Caco-2 (cell line): ENCODE measurements at regions of chr19 and their contacts with region 1.

Region 1: GRCh38 chr19:37941782-37942515 is 34.9 kb downstream of the SIPA1L3 start:
- DNase-seq: peak; percentile 91 to 94
- H3K4me3 ChIP-seq: no peak overlapping the region
- H3K4me3 Mint-ChIP-seq: peak overlapping the region; percentile 68
- H3K27ac Mint-ChIP-seq: peak overlapping the region; percentile 94
- H3K4me1 ChIP-seq: peaks cover 68% of the 10 kb centered on the region
- H3K4me1 Mint-ChIP-seq: peaks cover 51% of the 10 kb centered on the region
- H3K27me3 ChIP-seq: no peaks in the 10 kb centered on the region
- H3K27me3 Mint-ChIP-seq: no peaks in the 10 kb centered on the region
- CTCF ChIP-seq: no peak

Region 2: DNA sequence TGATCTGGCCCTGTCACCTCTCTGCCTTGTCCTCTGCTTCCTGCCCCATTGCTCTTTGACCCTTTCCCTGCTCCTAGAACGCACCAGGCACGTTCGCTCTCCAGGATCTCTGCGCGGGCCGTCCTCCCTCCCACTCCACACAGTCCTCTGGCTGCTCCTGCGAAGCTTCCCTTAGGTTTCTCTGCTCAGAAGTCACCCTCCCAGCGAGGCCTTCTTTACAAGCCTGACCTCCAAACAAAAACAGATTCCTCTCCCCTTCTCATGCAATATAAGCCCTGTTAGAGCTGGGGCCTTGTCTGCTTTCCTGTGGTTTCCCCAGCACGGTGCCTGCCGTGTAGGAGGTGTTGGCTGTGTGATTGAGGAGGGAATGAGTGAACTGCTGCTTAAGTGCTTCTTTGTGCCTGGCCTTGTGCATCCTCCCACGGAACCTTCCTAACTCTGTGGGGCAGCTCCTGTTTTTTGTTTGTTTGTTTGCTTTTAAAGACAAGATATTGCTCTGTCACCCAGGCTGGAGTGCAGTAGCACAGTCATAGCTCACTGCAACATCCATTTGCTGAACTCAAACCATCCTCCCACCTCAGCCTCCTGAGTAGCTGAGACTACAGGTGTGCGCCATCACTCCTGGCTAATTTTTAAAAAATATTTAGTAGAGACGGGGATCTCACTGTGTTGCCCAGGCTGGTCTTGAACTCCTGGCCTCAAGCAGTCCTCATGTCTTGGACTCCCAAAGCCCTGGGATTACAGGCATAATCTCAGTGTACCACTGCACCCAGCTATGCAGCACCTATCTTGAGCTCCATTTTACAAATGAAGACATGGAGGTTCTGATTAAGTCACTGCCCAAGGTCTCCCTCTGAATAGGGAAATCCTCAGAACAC is 47.0 kb after region 1 on chr19:
- CTCF ChIA-PET with region 1: interaction called, 5 read pairs
- POLR2A ChIA-PET with region 1: interaction called, 5 read pairs
- intact Hi-C with region 1: loop called (anchors 1 kb)
- DNase-seq: no peak
- H3K4me3 ChIP-seq: no peak overlapping the region
- H3K4me3 Mint-ChIP-seq: no peak overlapping the region
- H3K27ac Mint-ChIP-seq: peak overlapping the region; percentile 92
- H3K4me1 ChIP-seq: peaks cover 69% of the 10 kb centered on the region
- H3K4me1 Mint-ChIP-seq: peaks cover 55% of the 10 kb centered on the region
- H3K27me3 ChIP-seq: no peaks in the 10 kb centered on the region
- H3K27me3 Mint-ChIP-seq: no peaks in the 10 kb centered on the region
- CTCF ChIP-seq: no peak

Region 3: DNA sequence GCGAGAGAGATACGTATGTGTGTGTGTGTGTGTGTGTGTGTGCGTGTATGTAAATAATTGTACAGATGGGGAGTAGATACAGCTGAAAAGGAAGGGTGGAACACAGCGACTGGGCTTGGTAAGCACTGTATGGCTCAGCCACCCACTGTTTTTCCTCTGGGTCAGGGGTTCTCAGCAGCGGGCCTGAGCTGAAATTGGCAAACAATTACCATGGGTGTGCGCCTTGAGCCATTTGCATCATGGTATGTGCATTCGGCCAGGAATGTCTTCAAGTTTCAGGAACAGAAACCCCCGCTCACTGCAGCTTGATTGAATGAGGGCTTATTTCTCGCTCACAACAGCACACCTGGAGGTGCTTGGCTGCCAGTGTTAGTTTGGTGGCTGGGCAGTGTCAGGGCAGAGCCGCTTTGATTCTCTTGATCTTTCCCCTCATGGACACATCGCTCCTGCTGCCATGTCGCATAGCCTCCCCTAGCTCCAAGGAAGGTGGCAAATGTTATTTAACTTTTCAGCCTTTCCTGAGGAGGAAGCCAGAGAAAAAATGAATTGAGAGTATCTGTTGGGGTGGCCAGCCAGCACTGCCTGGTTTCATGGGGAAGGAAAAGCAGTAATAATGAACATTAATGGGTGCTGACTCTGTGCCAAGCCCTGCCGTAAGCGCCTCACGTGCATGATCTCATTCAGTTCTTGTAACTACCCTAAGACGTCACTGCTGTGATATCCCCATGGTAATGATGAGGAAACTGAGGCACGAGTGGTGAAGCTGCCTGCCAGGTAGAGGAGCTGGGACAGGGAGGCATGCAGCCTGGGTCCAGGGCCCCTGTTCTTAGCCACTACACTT is 91.9 kb after region 1 on chr19:
- CTCF ChIA-PET with region 1: no interaction called
- POLR2A ChIA-PET with region 1: no interaction called
- intact Hi-C with region 1: no loop called
- DNase-seq: no peak
- H3K4me3 ChIP-seq: no peak overlapping the region
- H3K4me3 Mint-ChIP-seq: no peak overlapping the region
- H3K27ac Mint-ChIP-seq: no peak overlapping the region
- H3K4me1 ChIP-seq: no peaks in the 10 kb centered on the region; the same call in 1 of the 2 replicates
- H3K4me1 Mint-ChIP-seq: peaks cover 15% of the 10 kb centered on the region
- H3K27me3 ChIP-seq: no peaks in the 10 kb centered on the region
- H3K27me3 Mint-ChIP-seq: no peaks in the 10 kb centered on the region
- CTCF ChIP-seq: no peak

Region 4: GRCh38 chr19:38047049-38048040 is 105.4 kb after region 1 on chr19:
- CTCF ChIA-PET with region 1: interaction called, 11 read pairs
- POLR2A ChIA-PET with region 1: no interaction called
- intact Hi-C with region 1: no loop called
- DNase-seq: no peak
- H3K4me3 ChIP-seq: no peak overlapping the region
- H3K4me3 Mint-ChIP-seq: no peak overlapping the region
- H3K27ac Mint-ChIP-seq: no peak overlapping the region
- H3K4me1 ChIP-seq: no peaks in the 10 kb centered on the region
- H3K4me1 Mint-ChIP-seq: peaks cover 14% of the 10 kb centered on the region
- H3K27me3 ChIP-seq: no peaks in the 10 kb centered on the region
- H3K27me3 Mint-ChIP-seq: no peaks in the 10 kb centered on the region
- CTCF ChIP-seq: no peak

Region 5: DNA sequence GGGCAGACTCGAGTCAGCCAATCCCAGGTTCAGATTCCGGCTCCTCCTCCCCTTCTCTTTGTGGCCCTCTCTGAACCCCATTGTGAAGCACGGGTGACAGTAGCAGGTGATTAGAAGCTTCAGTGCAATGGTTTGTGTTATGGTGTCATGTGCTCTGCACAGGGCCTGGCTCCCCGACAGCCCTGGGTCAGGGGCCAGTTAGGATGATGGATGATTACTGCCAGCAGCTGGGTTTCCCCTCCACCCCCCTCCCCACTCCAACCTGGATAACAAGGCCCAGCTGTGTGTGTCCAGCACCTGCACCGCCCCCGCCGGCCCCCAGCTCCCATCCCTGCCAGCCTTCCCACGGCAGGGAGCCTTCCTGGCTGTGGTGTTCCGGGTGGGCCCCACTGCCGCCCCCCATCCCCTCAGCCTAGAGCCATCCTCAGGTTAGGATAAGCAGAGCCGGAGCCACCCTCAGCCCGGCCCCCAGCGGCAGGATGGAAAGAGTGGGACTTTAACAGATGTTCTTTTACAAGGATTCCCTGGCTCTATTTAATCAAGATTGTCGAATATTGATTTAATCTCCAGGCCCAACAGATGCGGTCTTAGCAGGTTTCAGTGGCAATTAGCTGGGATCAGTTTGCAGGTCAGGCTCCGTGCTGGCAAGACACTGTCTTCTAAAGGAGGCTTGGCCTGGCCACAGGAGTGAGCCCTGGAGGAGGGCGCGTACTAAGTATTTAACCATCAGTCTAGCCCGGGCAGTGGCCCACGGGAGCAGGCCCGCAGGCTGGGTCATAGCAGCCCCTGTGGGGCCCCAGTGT is 121.2 kb after region 1 on chr19:
- CTCF ChIA-PET with region 1: no interaction called
- POLR2A ChIA-PET with region 1: no interaction called
- intact Hi-C with region 1: loop called (anchors 1 kb)
- DNase-seq: peak; percentile 17 to 58
- H3K4me3 ChIP-seq: no peak overlapping the region
- H3K4me3 Mint-ChIP-seq: no peak overlapping the region
- H3K27ac Mint-ChIP-seq: peak overlapping the region; percentile 55
- H3K4me1 ChIP-seq: peaks cover 12% of the 10 kb centered on the region
- H3K4me1 Mint-ChIP-seq: peaks cover 13% of the 10 kb centered on the region
- H3K27me3 ChIP-seq: no peaks in the 10 kb centered on the region
- H3K27me3 Mint-ChIP-seq: no peaks in the 10 kb centered on the region
- CTCF ChIP-seq: no peak